Caco-2 (cell line): ENCODE measurements at regions of chr2 and their contacts with region 1.

Region 1: GRCh38 chr2:165203689-165204559 is at the start of gene SCN3A:
- DNase-seq: peak; percentile 40 to 58
- H3K4me3 ChIP-seq: no peak within 1 kb of the TSS
- H3K4me3 Mint-ChIP-seq: no peak within 1 kb of the TSS
- H3K27ac Mint-ChIP-seq: no peak within 1 kb of the TSS
- H3K4me1 ChIP-seq: no peaks in the 10 kb centered on the region
- H3K4me1 Mint-ChIP-seq: no peaks in the 10 kb centered on the region
- H3K27me3 ChIP-seq: no peaks in the 10 kb centered on the region
- H3K27me3 Mint-ChIP-seq: no peaks in the 10 kb centered on the region
- CTCF ChIP-seq: peak; percentile 67 to 80
- total RNA-seq, gene SCN3A: not detected in 2 replicates

Region 2: DNA sequence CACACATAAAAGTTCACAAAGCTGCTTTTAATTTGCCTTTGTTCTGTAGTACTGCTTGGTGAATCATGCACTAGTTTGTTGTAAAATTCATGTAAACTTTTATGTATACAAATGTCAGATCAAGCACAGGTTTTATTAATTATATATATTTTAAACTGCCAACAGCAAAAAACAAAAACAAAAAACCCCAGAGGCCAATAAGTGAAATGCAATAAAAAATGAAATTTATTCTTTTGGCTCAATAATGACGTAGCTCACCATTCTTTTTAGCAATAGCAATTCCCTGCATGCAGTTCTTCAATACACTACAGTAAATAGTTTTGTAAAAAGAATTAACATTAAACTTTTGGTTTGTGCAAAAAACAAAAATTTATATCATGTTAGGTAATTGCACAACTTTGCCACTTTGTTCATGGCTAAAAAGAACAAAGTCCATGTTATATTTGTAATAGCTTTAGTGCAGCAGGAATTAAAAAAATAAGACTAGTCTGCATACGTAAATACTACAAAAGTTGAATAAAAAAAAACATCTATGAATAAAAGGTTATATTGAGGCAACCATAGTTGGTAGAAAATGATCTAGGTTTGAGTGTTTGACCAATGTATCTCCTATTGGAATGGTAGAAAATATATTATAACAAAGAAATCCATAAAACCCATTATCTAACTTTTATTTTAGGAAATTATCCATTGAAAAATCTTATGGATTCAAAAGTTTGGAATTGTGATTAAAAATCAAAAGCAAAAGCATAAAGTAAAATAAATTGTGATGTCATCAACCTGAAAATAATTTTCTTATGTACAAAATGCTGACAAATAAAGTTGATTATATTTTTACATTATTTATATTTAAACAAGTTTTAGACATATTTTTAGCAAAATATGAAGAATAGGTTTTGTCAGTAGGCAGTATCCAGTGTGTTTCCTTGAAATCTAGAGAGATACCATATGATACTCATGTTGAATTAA is 115.7 kb before region 1 on chr2:
- CTCF ChIA-PET with region 1: no interaction called
- POLR2A ChIA-PET with region 1: no interaction called
- intact Hi-C with region 1: no loop called
- DNase-seq: no peak
- H3K4me3 ChIP-seq: no peak overlapping the region
- H3K4me3 Mint-ChIP-seq: no peak overlapping the region
- H3K27ac Mint-ChIP-seq: no peak overlapping the region
- H3K4me1 ChIP-seq: no peaks in the 10 kb centered on the region
- H3K4me1 Mint-ChIP-seq: no peaks in the 10 kb centered on the region
- H3K27me3 ChIP-seq: no peaks in the 10 kb centered on the region
- H3K27me3 Mint-ChIP-seq: peaks cover 2% of the 10 kb centered on the region
- CTCF ChIP-seq: no peak

Region 3: DNA sequence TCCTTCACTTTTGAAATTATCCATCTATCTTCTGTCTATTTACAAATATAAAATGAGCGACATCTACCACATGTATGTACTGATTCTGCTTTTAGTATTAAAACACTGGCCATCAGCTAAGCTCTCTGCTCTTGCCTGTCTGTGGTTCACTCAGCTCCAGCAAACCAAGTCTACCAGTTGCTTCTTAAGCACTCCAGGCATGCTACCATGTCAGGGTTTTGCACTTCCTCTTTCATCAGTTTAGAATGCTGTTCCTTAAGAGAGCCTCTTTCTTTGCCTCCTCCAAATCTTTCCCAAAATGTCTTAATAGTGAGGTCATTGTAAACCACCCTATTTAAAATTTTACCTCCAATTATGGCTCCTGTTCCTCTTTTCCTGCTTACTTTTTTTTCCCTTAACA is 59.6 kb before region 1 on chr2:
- CTCF ChIA-PET with region 1: interaction called, 3 read pairs
- POLR2A ChIA-PET with region 1: no interaction called
- intact Hi-C with region 1: loop called (anchors 1 kb)
- DNase-seq: no peak
- H3K4me3 ChIP-seq: no peak overlapping the region
- H3K4me3 Mint-ChIP-seq: no peak overlapping the region
- H3K27ac Mint-ChIP-seq: no peak overlapping the region
- H3K4me1 ChIP-seq: no peaks in the 10 kb centered on the region
- H3K4me1 Mint-ChIP-seq: no peaks in the 10 kb centered on the region
- H3K27me3 ChIP-seq: no peaks in the 10 kb centered on the region
- H3K27me3 Mint-ChIP-seq: peaks cover 13% of the 10 kb centered on the region
- CTCF ChIP-seq: no peak